Transverse colon (tissue), 4 donors: ENCODE measurements at regions of chr1 and their contacts with region 1.

Region 1: DNA sequence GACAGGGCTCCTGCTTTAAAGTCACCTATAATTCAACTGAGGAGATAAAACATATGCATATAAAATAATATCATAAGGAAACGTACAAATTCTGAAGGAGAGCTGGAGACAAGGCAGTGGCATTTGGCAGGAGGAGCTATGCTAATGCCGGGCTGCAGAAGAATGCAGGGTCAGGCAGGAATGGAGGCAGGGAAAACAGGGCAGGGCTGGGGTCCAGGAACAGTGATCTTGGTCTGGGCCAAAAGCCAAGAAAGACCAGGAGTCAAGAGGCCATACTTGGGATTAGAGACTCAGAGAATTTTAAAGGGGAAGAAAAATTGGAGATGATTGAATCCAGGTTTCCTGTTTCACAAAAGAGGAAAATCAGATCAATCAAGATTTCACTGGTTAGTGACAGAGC is 20.0 kb upstream of the BRDT start:
- DNase-seq: no peak
- H3K4me3 ChIP-seq: no peak overlapping the region
- H3K27ac ChIP-seq: no peak overlapping the region
- H3K4me1 ChIP-seq: no peaks in the 10 kb centered on the region
- H3K27me3 ChIP-seq: no peaks in the 10 kb centered on the region
- CTCF ChIP-seq: no peak
- EP300 ChIP-seq: no peak
- POLR2A ChIP-seq: no peak

Region 2: DNA sequence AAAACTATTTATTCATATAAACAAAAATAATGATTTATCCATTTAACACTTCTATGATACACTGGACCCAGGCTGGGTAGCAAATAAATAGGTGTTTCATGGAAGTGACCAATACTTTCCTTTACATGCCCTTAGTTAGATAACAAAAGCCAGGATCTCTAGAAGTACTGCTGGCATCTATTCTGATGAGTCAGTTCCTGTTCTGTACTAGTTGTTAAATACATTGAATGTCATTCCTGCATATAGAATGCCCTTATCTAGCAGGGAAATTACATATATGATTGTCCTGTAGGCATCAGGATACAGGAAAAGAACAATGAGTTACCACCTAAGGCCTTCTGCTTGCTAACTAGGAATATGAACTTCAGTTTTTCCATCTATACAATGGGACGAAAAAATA is 655.4 kb before region 1 on chr1:
- in situ Hi-C with region 1: loop called in 2 of 4 experiments (anchors 25 kb)
- intact Hi-C with region 1: no loop called
- DNase-seq: no peak
- H3K4me3 ChIP-seq: no peak overlapping the region
- H3K27ac ChIP-seq: no peak overlapping the region
- H3K4me1 ChIP-seq: no peaks in the 10 kb centered on the region
- H3K27me3 ChIP-seq: no peaks in the 10 kb centered on the region
- CTCF ChIP-seq: no peak
- EP300 ChIP-seq: no peak
- POLR2A ChIP-seq: no peak

Region 3: DNA sequence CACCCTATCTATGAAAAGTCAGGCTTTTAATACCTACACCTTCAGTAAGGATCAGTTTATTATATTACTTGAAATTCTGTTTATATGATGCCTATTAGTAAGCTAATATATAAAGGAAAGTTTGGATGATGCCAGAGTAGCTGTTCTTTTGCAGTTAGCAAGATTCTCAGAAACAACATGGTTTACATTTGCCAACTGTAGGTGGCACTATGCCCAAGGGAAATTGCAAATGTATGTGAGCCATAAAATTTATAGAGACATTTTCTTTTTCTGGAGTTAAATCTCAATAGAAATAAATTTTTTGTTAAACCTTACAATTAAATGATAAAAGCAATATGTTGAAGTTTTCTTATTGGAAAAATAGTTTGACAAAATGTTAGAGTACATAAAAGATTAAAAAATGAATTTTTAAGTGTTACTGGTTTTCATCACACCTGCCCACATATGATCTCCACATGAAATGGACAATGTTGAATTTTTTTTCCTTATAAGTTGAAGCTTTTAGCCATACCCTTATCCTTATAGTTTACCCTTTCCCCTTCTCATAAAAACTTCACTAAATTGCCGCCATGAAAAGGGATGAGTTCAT is 68.5 kb after region 1 on chr1:
- in situ Hi-C with region 1: no loop called
- intact Hi-C with region 1: no loop called
- DNase-seq: peak; percentile 21
- H3K4me3 ChIP-seq: no peak overlapping the region
- H3K27ac ChIP-seq: no peak overlapping the region
- H3K4me1 ChIP-seq: no peaks in the 10 kb centered on the region
- H3K27me3 ChIP-seq: no peaks in the 10 kb centered on the region
- CTCF ChIP-seq: peak; percentile 44 to 54 (median 50)
- EP300 ChIP-seq: no peak
- POLR2A ChIP-seq: no peak